ENCODE measurements at regions of chr11 and their contacts with region 1.

Region 1: DNA sequence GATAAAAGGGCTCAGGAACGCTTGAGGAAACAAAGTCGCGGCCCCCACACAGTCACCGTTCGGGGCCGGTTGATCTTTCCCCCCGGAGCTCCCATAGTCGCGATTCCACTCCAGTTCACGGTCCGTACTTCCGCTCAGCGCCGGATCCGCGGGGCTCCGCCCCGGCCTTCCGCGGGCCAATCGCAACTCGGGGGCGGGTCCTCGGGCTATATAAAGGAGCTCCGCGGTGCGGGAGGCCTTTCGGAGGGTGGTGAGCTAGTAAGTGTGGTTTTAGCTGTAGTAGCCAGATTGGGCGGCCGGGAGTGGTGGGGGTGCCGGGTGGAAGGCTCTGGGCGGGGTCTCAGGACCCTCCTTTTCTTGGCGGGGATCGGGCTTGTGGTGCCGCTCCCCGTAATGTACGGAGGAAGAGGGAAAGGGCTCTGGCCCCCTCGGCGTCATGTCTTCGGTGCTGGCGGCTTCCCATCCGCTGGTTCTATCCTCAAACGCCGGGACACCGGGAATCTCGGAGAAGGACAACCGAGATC is at the starts of genes C11orf98 and CSKMT:
- DNase-seq: peak; percentile 92
- H3K4me3 Mint-ChIP-seq: peak within 1 kb of the TSS; percentile 98
- H3K27ac Mint-ChIP-seq: peak within 1 kb of the TSS; percentile 91
- H3K4me1 Mint-ChIP-seq: peaks cover 5% of the 10 kb centered on the region
- H3K27me3 Mint-ChIP-seq: no peaks in the 10 kb centered on the region
- CTCF ChIP-seq: no peak
- total RNA-seq, gene C11orf98: 81.2 and 91.6 TPM in 2 replicates
- total RNA-seq, gene CSKMT: 15.4 and 31.2 TPM in 2 replicates

Region 2: DNA sequence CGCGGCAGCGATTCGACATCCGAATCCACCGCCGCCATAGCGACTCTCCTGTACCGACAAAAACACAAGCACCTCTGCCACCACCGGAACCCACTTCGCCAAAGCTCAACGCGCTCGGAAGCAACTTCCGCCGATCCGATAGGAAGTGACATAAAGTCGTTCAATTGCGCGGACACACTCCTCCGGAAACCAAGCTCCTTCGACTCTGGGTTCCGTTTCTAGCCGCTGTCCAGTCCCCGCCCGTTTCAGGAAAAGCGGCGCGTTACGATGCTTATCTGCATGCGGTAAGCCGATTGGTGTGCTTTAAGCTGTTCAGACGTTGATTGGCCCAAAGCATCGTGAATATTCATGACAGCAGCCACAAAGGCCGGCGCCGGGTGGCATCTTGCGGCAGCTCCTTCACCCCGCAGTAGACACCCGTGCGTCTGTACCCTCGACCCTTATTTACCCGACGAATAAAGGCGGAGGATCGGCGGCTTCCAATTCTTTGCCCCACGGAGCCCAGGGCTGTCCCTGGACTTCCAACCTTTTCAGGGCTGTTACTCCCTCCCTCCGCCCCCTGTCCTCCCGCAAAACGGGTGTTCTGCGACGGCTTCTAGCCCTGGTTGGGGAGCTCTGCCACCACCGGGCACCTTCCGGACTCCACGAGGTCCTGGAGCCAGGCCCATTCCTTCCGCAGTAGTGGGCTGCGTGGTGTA is 73.5 kb before region 1 on chr11 and contains the start of gene TUT1:
- CTCF ChIA-PET with region 1: interaction called, 10 read pairs
- POLR2A ChIA-PET with region 1: interaction called, 70 read pairs
- intact Hi-C with region 1: loop called (anchors 5 kb)
- DNase-seq: peak; percentile 99
- H3K4me3 Mint-ChIP-seq: peak within 1 kb of the TSS; percentile 96
- H3K27ac Mint-ChIP-seq: peak within 1 kb of the TSS; percentile 95
- H3K4me1 Mint-ChIP-seq: peaks cover 12% of the 10 kb centered on the region
- H3K27me3 Mint-ChIP-seq: no peaks in the 10 kb centered on the region
- CTCF ChIP-seq: no peak
- total RNA-seq, gene TUT1: 26.0 and 28.3 TPM in 2 replicates

Region 3: DNA sequence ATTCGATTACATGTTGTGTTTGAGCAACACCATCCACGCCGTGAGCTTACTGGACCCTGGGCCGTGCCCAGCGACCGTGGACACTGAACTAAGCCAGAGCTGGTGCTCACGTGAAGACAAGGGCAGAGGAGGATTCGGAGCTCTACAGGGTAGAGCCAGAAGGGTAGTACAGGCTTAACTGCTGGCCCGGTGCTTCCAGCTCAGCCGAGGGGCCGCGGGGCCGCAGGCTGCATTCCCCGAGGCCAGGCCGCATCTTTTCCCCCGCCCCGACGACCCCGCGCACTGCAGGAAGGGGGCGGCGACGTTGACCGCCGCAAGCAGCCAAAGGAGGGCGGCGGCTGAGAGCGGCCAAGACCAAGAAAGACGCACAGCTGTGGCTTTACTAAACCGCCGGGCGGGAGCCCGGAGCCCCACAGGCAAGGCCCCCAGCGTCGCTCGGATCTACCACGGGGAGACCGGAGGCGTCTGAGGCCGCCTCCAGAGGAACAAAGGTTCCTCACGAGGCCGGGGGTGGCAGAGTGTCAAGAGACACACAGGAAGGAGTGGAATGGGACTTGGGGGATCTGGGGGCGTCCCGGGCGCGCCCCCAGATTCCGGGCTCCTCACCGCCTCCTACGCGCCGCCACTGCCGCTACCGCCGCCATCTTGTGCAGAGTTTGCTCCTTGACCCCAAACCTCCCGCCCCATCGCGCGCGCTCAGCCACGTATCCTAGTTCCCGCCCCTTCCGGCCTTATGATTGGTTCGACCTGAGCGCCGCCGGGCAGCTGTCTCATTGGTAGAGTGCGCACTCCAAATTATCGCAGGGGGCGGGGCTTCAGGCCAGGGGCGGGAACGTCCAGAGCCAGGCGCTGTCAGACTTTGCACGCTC is 18.9 kb before region 1 on chr11 and contains the start of gene GANAB:
- CTCF ChIA-PET with region 1: interaction called, 3 read pairs
- POLR2A ChIA-PET with region 1: interaction called, 98 read pairs
- intact Hi-C with region 1: no loop called
- DNase-seq: peak; percentile 99
- H3K4me3 Mint-ChIP-seq: peak within 1 kb of the TSS; percentile 95
- H3K27ac Mint-ChIP-seq: peak within 1 kb of the TSS; percentile 92
- H3K4me1 Mint-ChIP-seq: no peaks in the 10 kb centered on the region
- H3K27me3 Mint-ChIP-seq: no peaks in the 10 kb centered on the region
- CTCF ChIP-seq: no peak
- total RNA-seq, gene GANAB: 364 and 374 TPM in 2 replicates

Region 4: DNA sequence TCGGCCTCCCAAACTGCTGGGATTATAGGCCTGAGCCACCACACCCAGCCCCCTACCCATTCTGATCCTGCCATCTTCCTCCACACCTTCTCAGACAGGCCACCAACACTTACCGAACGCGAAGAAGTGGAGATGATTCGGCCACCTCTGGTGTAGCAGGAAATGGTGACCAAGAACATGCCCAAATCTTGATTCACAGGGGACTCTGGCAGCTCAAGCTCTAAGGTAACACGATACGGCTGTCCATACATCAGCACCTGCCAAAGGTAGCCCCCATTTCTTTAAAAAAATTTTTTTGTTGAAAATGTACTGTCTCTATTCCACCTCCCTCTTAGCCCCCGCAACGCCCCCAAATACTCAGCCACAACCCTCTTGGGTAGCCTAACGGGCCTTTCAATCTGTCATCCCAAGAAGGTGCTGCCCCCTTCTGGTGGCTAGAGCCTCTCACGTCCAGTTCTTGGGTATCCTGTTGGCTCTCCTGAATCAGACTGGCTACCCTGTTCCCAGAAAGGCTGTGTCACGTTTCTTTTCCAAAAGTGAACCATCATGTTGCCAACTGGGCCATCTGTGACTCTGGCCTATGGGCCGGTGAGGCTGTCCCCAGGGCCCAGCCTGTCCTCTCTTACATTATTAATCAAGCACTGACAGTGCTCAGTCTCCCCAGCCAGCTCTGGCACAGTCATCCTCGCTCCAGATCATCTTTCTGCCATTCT is 29.5 kb after region 1 on chr11:
- CTCF ChIA-PET with region 1: interaction called, 13 read pairs
- POLR2A ChIA-PET with region 1: interaction called, 12 read pairs
- intact Hi-C with region 1: no loop called
- DNase-seq: peak; percentile 86
- H3K4me3 Mint-ChIP-seq: no peak overlapping the region
- H3K27ac Mint-ChIP-seq: no peak overlapping the region
- H3K4me1 Mint-ChIP-seq: peaks cover 6% of the 10 kb centered on the region
- H3K27me3 Mint-ChIP-seq: no peaks in the 10 kb centered on the region
- CTCF ChIP-seq: peak; percentile 80

Region 5: GRCh38 chr11:62771144-62772021 is 106.2 kb after region 1 on chr11 and contains the start of gene TAF6L:
- CTCF ChIA-PET with region 1: no interaction called
- POLR2A ChIA-PET with region 1: interaction called, 12 read pairs
- intact Hi-C with region 1: no loop called
- DNase-seq: peak; percentile 98
- H3K4me3 Mint-ChIP-seq: peak within 1 kb of the TSS; percentile 98
- H3K27ac Mint-ChIP-seq: peak within 1 kb of the TSS; percentile 95
- H3K4me1 Mint-ChIP-seq: peaks cover 5% of the 10 kb centered on the region
- H3K27me3 Mint-ChIP-seq: no peaks in the 10 kb centered on the region
- CTCF ChIP-seq: no peak
- total RNA-seq, gene TAF6L: 11.6 and 12.0 TPM in 2 replicates

Region 6: DNA sequence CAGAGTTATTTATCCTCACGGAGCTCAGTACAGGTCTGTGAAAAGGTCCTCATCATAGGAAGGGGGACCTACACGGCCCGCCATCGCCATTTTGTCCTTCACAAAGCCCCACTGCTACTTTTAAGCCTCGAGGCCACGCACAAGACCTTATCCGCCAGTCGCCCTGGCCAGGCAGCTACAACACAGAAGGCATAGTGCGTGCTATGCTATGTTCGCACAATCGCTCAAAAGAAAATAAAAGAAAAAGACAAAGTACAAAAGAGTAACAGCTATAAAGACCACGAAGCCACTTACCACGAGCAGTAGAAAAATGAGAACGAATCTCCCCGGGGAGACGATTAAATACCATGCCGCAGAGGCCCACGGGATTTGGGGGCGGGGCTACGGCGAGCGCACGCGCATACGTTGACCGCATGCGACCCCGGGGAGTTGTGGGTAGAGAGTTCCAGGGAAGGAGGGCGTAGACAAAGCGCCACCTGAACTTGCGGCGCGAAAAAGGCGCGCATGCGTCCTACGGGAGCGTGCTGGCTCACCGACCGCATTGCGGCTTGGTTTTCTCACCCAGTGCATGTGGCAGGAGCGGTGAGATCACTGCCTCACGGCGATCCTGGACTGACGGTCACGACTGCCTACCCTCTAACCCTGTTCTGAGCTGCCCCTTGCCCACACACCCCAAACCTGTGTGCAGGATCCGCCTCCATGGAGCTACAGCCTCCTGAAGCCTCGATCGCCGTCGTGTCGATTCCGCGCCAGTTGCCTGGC is 190.6 kb after region 1 on chr11:
- CTCF ChIA-PET with region 1: interaction called, 4 read pairs
- POLR2A ChIA-PET with region 1: interaction called, 21 read pairs
- intact Hi-C with region 1: no loop called
- DNase-seq: peak; percentile 98
- H3K4me3 Mint-ChIP-seq: peak overlapping the region; percentile 94
- H3K27ac Mint-ChIP-seq: peak overlapping the region; percentile 64
- H3K4me1 Mint-ChIP-seq: peaks cover 35% of the 10 kb centered on the region
- H3K27me3 Mint-ChIP-seq: no peaks in the 10 kb centered on the region
- CTCF ChIP-seq: no peak

Region 7: GRCh38 chr11:63986156-63986931 is 1321.2 kb after region 1 on chr11 and contains the start of gene OTUB1:
- CTCF ChIA-PET with region 1: no interaction called
- POLR2A ChIA-PET with region 1: no interaction called
- intact Hi-C with region 1: no loop called
- DNase-seq: peak; percentile 98
- H3K4me3 Mint-ChIP-seq: peak within 1 kb of the TSS; percentile 87
- H3K27ac Mint-ChIP-seq: peak within 1 kb of the TSS; percentile 96
- H3K4me1 Mint-ChIP-seq: peaks cover 10% of the 10 kb centered on the region
- H3K27me3 Mint-ChIP-seq: no peaks in the 10 kb centered on the region
- CTCF ChIP-seq: no peak
- total RNA-seq, gene OTUB1: 50.9 and 56.0 TPM in 2 replicates